Activated CD4-positive, alpha-beta T cell treated with anti-CD3 and anti-CD28 coated beads, Interleukin-2, amount 10 ng/mL, durations not matched to agents 24 days and 14 days (primary cell): ENCODE measurements at regions of chr3 and their contacts with region 1.

Region 1: DNA sequence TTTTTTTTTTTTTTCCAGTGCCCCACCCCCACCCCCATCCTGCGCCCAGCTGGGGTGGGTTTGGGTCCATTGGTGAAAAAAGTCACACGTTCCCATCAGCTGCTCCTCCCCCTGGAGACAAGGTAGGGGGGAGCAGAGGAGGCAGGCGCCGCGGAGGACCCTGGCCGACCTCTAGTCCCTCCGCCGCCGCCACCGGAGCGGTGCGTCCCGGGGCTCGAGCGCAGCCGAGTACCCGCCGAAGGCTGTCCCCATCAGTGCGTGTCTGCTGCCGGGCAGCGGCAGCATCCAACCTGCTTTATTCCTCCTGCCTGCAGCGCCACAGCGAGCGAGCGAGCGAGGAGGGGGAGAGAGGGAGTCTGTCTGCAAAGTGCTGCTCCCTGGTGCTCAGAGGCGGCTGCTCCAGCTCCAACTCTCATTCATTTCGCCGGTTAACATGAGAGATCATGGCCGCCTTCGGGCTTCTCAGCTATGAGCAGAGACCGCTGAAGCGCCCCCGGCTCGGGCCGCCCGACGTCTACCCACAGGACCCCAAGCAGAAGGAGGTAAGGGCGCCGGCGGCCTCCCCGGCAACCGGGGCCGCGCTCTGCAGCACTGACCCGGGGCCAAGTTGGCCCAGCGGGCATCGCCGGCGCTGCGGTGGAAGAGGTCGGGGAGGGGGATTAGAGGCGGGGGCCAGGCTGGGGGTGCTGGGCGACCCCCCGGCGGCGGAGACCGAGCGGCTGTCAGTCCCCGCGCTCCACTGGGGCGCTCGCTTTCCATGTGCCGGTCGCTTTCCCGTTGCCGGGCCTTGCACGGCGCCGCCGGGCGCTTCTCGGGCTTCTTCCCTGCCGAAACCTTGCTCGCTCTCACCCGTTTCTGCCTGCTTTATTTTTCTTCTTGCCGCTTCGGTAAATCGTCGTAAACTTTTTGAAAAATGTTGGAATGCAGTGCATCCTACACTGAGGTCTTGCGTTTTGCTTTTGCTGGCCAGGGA is 1.3 kb downstream of the MED12L start:
- DNase-seq: peak; percentile 88
- H3K4me3 Mint-ChIP-seq: peak overlapping the region; percentile 88
- H3K27ac Mint-ChIP-seq: peak overlapping the region; percentile 53
- H3K4me1 Mint-ChIP-seq: peaks cover 8% of the 10 kb centered on the region
- H3K27me3 Mint-ChIP-seq: peaks cover 58% of the 10 kb centered on the region

Region 2: GRCh38 chr3:149812606-149813366 is 1274.0 kb before region 1 on chr3 and contains the start of gene RNF13:
- intact Hi-C with region 1: loop called (anchors 5 kb)
- DNase-seq: peak; percentile 98
- H3K4me3 Mint-ChIP-seq: peak within 1 kb of the TSS; percentile 97
- H3K27ac Mint-ChIP-seq: peak within 1 kb of the TSS; percentile 100
- H3K4me1 Mint-ChIP-seq: peaks cover 44% of the 10 kb centered on the region
- H3K27me3 Mint-ChIP-seq: peaks cover 11% of the 10 kb centered on the region
- total RNA-seq, gene RNF13: 31.6 and 36.7 TPM in 2 replicates

Region 3: DNA sequence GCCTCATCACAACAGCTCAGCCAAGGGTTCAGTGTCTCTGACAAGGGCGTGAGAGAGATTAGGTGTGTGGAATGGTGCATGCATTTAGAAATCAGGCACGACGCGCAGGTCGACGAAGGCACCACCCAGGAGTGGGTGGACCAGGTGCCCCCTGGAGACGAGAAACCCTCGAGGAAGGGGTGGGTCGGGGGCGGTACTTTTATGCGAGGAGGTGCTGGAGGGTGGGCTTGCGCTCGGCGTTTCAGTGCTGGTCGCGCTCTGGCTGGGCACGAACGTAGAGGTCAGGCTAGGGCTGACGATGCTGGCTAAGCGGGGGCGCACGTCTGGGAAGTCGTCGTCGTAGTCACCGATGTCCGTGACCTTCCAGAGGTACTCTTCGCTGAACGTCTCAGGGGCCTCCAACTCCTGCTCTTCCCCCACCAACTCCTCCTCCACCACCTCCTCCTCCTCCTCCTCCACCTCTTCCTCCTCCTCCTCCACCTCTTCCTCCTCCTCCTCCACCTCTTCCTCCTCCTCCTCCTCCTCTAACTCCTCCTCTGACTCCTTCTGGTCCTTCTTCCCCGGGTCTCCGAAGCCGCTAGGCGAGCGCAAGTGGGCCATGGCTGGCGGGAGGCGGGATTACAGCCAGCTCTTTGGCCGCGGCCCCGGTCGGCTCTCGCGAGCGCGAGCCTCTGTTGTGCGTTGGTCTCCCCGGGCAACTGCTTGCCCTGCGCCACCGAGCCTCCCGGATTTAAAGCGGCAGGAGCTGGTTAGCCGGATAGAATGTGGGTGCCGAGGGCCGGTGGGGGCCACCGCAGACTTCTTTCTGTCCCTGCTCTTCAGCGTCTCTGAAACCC is 383.3 kb before region 1 on chr3 and contains the start of gene ERICH6:
- intact Hi-C with region 1: loop called (anchors 5 kb)
- DNase-seq: peak; percentile 95
- H3K4me3 Mint-ChIP-seq: peak within 1 kb of the TSS; percentile 92
- H3K27ac Mint-ChIP-seq: peak within 1 kb of the TSS; percentile 99
- H3K4me1 Mint-ChIP-seq: peaks cover 28% of the 10 kb centered on the region
- H3K27me3 Mint-ChIP-seq: peaks cover 10% of the 10 kb centered on the region
- total RNA-seq, gene ERICH6: not detected in 2 replicates

Region 4: GRCh38 chr3:150787741-150788370 is 298.9 kb before region 1 on chr3:
- intact Hi-C with region 1: loop called (anchors 5 kb)
- DNase-seq: peak; percentile 92
- H3K4me3 Mint-ChIP-seq: peak overlapping the region; percentile 2
- H3K27ac Mint-ChIP-seq: peak overlapping the region; percentile 39
- H3K4me1 Mint-ChIP-seq: peaks cover 39% of the 10 kb centered on the region
- H3K27me3 Mint-ChIP-seq: peaks cover 4% of the 10 kb centered on the region

Region 5: GRCh38 chr3:151146071-151146730 is 59.4 kb after region 1 on chr3:
- intact Hi-C with region 1: loop called (anchors 1 kb)
- DNase-seq: peak; percentile 86
- H3K4me3 Mint-ChIP-seq: no peak overlapping the region
- H3K27ac Mint-ChIP-seq: no peak overlapping the region
- H3K4me1 Mint-ChIP-seq: no peaks in the 10 kb centered on the region
- H3K27me3 Mint-ChIP-seq: peaks cover 29% of the 10 kb centered on the region

Region 6: DNA sequence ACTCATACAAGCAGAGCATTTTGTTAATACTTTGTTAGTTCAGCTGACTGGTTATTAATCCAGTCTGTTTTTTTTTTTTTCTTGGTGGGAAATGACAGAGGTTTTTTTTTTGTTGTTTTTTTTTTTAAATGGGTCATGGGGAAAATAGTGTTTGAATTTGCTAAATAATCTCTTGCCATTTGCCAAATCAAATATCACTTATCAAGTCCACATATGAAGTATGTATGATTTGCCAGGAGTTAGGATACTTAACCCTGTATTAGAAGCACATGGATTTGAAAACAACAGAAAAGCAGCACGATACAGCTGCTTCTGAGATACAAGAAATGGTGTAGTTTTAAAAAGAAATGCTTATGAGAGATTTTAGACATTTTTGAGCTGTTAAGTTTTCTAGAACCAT is 170.0 kb after region 1 on chr3:
- intact Hi-C with region 1: no loop called
- DNase-seq: no peak
- H3K4me3 Mint-ChIP-seq: no peak overlapping the region
- H3K27ac Mint-ChIP-seq: no peak overlapping the region
- H3K4me1 Mint-ChIP-seq: no peaks in the 10 kb centered on the region
- H3K27me3 Mint-ChIP-seq: peaks cover 34% of the 10 kb centered on the region

Region 7: DNA sequence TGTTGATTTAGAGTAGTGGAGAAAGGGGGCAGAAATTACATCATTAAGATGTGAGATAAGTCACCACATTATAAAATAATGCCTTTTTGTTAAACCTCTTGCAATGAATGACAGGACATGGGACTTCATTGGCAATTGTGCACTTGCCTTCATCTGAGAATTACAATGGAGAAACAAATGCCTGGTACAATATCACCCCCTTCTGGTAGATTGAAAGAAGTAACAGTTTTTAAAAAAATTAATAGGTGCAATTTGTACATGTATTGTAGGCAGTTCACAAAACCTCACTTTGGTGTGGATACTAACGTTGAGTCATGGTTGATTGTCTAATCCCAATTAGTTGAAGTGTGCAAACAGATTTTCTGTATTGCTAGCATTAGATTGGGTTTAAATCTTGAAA is 196.2 kb after region 1 on chr3:
- intact Hi-C with region 1: loop called (anchors 10 kb)
- DNase-seq: peak; percentile 70
- H3K4me3 Mint-ChIP-seq: no peak overlapping the region
- H3K27ac Mint-ChIP-seq: peak overlapping the region; percentile 81
- H3K4me1 Mint-ChIP-seq: peaks cover 50% of the 10 kb centered on the region
- H3K27me3 Mint-ChIP-seq: no peaks in the 10 kb centered on the region